ENCODE measurements at regions of chr1 and their contacts with region 1.

Region 1: GRCh38 chr1:39973503-39974135 is 18.7 kb downstream of the MFSD2A start:
- DNase-seq: peak; percentile 74
- H3K4me3 Mint-ChIP-seq: no peak overlapping the region
- H3K27ac Mint-ChIP-seq: no peak overlapping the region
- H3K4me1 Mint-ChIP-seq: peaks cover 2% of the 10 kb centered on the region
- H3K27me3 Mint-ChIP-seq: no peaks in the 10 kb centered on the region

Region 2: DNA sequence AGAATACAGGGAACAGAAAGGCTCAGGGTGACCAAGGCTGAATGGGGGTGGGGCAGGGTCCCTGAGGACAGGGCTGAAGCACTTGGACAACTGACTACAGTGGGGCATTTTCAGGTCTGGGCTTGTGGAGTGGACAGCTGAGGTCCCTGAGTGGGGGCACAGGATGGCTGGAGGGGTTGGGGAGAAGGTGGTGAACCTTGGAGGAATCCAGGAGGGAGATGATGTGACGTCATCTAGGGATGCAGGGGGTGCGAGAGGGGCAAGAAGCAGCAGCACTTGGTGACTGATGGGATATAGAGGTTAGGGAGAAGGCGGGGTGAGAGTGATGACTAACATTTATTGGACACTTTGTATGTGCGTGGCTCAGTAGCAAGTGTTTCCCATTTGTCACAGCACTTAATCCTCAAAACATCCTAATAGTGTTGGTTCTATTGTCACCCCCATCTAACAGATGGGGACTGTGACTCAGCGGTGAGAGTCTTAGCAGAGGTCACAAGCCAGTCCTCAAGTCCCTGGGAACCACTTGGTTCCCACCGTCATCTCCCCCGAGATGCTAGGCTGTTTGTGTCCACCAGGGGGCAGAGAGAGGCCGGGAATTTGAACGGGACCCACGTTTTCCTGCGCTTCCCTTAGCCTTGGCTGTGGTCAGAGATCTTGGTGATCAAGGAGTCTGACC is 157.1 kb before region 1 on chr1:
- CTCF ChIA-PET with region 1: interaction called, 15 read pairs
- POLR2A ChIA-PET with region 1: no interaction called
- DNase-seq: peak; percentile 56
- H3K4me3 Mint-ChIP-seq: peak overlapping the region; percentile 52
- H3K27ac Mint-ChIP-seq: no peak overlapping the region
- H3K4me1 Mint-ChIP-seq: peaks cover 14% of the 10 kb centered on the region
- H3K27me3 Mint-ChIP-seq: peaks cover 12% of the 10 kb centered on the region

Region 3: DNA sequence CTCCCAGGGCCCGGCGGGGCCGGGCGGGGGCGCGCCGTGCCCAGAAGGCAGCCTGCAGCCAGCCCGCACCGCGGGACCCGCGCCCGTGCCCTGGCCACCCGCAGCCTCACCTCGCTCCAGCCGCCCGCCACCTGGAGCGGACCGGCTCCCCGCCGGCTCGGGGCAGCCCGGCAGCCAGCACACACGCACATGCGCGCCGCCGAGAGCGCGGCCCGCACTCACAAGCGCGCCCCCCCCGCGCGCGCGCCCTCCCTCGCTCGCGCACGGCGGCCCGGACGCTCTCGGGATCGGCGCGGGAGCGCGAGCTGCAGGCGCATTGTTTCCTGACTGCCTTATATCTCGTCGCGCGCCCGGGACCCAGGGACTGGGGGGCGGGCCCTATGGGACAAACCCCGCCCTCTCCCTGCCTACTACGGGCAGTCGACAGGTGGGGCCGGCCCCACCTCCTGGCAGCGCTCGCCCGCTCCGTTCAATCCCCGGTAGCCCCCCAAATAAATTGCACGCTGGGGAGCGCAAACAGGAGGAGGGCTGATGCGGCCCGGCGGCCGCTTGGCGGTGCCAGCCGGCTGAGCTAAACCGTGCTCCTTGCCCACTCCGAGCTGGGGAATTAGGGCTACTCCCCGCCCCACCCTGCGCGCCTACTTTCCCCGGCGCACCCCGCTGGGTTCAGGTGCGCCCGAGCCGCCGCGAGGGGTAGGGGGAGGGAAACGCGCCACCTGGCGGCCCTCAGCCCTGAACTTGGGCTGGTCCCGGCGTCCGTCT is 71.7 kb before region 1 on chr1 and contains the start of gene MYCL:
- CTCF ChIA-PET with region 1: interaction called, 16 read pairs
- POLR2A ChIA-PET with region 1: no interaction called
- DNase-seq: peak; percentile 76
- H3K4me3 Mint-ChIP-seq: peak within 1 kb of the TSS; percentile 66
- H3K27ac Mint-ChIP-seq: no peak within 1 kb of the TSS
- H3K4me1 Mint-ChIP-seq: peaks cover 5% of the 10 kb centered on the region
- H3K27me3 Mint-ChIP-seq: peaks cover 64% of the 10 kb centered on the region
- total RNA-seq, gene MYCL: 0.10 to 0.18 TPM

Region 4: DNA sequence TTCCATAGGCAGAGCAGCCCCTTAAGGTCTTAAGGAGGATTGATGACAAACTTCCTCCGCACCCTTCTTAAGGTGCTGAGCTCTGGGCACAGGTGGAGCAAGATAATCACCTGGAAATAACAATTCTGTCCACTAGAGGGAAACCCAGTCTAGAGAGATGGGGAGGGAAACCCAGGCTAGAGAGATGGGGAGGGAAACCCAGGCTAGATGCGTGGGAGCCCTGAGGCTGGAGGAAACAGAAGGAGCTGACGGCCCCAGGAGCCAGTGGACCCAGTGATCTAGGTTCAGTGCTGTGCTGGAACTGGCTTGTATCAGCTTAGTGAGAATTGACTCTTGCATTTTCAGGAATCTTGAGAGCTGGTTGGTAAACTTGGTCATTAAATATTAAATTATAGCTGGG is 54.1 kb before region 1 on chr1:
- CTCF ChIA-PET with region 1: interaction called, 64 read pairs
- POLR2A ChIA-PET with region 1: interaction called, 5 read pairs
- DNase-seq: peak; percentile 33
- H3K4me3 Mint-ChIP-seq: no peak overlapping the region
- H3K27ac Mint-ChIP-seq: no peak overlapping the region
- H3K4me1 Mint-ChIP-seq: no peaks in the 10 kb centered on the region
- H3K27me3 Mint-ChIP-seq: peaks cover 1% of the 10 kb centered on the region

Region 5: GRCh38 chr1:39954816-39955546 is 18.6 kb before region 1 on chr1 and contains the start of gene MFSD2A:
- CTCF ChIA-PET with region 1: interaction called, 11 read pairs
- POLR2A ChIA-PET with region 1: interaction called, 4 read pairs
- DNase-seq: peak; percentile 88
- H3K4me3 Mint-ChIP-seq: peak within 1 kb of the TSS; percentile 84
- H3K27ac Mint-ChIP-seq: no peak within 1 kb of the TSS
- H3K4me1 Mint-ChIP-seq: peaks cover 24% of the 10 kb centered on the region
- H3K27me3 Mint-ChIP-seq: peaks cover 4% of the 10 kb centered on the region
- total RNA-seq, gene MFSD2A: 2.4 to 2.5 TPM